Endothelial cell of umbilical vein (primary cell): ENCODE measurements at regions of chr17 and their contacts with region 1.

Region 1: DNA sequence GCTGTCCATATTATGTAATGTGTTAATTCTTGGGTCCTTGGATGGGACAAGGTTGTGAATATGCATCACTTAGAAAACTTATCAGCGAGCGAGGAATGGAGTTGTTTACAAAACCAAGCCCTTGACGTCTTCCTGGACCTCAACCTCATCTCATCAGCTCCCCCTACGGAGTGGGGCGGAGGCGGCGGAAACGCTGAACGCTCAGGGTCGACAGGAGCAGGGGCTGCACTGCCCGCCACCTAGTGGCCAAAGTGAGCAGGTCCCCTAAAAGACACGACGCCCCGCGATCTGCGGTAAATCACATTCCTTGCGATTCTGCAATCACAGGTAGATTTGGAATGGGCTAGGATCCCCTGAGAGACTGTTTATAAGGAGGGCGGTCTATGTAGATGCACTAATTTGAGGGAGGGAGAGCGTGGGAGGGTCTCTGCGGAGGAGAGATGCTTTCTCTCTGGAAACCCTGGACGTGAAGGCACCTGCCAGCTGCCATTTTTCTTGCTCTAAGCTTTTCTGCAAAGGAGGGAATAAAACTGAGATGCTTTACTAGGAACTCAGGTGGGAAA is 5.4 kb upstream of the ICAM2 start:
- DNase-seq: peak; percentile 82
- H3K4me3 ChIP-seq: no peak overlapping the region
- H3K27ac ChIP-seq: peak overlapping the region; percentile 43
- H3K4me1 ChIP-seq: peaks cover 29% of the 10 kb centered on the region
- H3K27me3 ChIP-seq: no peaks in the 10 kb centered on the region
- CTCF ChIP-seq: peak; percentile 98
- POLR2A ChIP-seq: no peak

Region 2: GRCh38 chr17:63919311-63919723 is 106.5 kb before region 1 on chr17:
- CTCF ChIA-PET with region 1: interaction called, 159 read pairs
- POLR2A ChIA-PET with region 1: no interaction called
- dilution Hi-C with region 1: no loop called
- intact Hi-C with region 1: loop called (anchors 1 kb)
- DNase-seq: peak; percentile 68
- H3K4me3 ChIP-seq: no peak overlapping the region
- H3K27ac ChIP-seq: no peak overlapping the region
- H3K4me1 ChIP-seq: no peaks in the 10 kb centered on the region
- H3K27me3 ChIP-seq: peaks cover 0 to 3% of the 10 kb centered on the region in 2 experiments
- CTCF ChIP-seq: peak; percentile 75 to 89
- POLR2A ChIP-seq: no peak

Region 3: GRCh38 chr17:64005734-64006167 is 20.1 kb before region 1 on chr17:
- CTCF ChIA-PET with region 1: interaction called, 140 read pairs
- POLR2A ChIA-PET with region 1: interaction called, 13 read pairs
- dilution Hi-C with region 1: no loop called
- intact Hi-C with region 1: loop called (anchors 1 kb)
- DNase-seq: peak; percentile 64
- H3K4me3 ChIP-seq: peak overlapping the region; percentile 66 to 87 (median 73)
- H3K27ac ChIP-seq: peak overlapping the region; percentile 91
- H3K4me1 ChIP-seq: peaks cover 85% of the 10 kb centered on the region
- H3K27me3 ChIP-seq: no peaks in the 10 kb centered on the region
- CTCF ChIP-seq: no peak
- POLR2A ChIP-seq: no peak

Region 4: GRCh38 chr17:64056269-64057005 is 30.6 kb after region 1 on chr17:
- CTCF ChIA-PET with region 1: interaction called, 44 read pairs
- POLR2A ChIA-PET with region 1: no interaction called
- dilution Hi-C with region 1: no loop called
- intact Hi-C with region 1: loop called (anchors 1 kb)
- DNase-seq: no peak
- H3K4me3 ChIP-seq: no peak overlapping the region
- H3K27ac ChIP-seq: no peak overlapping the region
- H3K4me1 ChIP-seq: peaks cover 17% of the 10 kb centered on the region
- H3K27me3 ChIP-seq: no peaks in the 10 kb centered on the region
- CTCF ChIP-seq: no peak
- POLR2A ChIP-seq: no peak

Region 5: GRCh38 chr17:64097196-64097936 is 71.6 kb after region 1 on chr17:
- CTCF ChIA-PET with region 1: interaction called, 10 read pairs
- POLR2A ChIA-PET with region 1: no interaction called
- dilution Hi-C with region 1: no loop called
- intact Hi-C with region 1: no loop called
- DNase-seq: peak; percentile 97
- H3K4me3 ChIP-seq: no peak overlapping the region
- H3K27ac ChIP-seq: peak overlapping the region; percentile 83
- H3K4me1 ChIP-seq: peaks cover 26% of the 10 kb centered on the region
- H3K27me3 ChIP-seq: no peaks in the 10 kb centered on the region
- CTCF ChIP-seq: no peak
- POLR2A ChIP-seq: no peak

Region 6: GRCh38 chr17:64174686-64175456 is 149.1 kb after region 1 on chr17:
- CTCF ChIA-PET with region 1: interaction called, 12 read pairs
- POLR2A ChIA-PET with region 1: no interaction called
- dilution Hi-C with region 1: no loop called
- intact Hi-C with region 1: loop called (anchors 1 kb)
- DNase-seq: peak; percentile 67
- H3K4me3 ChIP-seq: no peak overlapping the region
- H3K27ac ChIP-seq: peak overlapping the region; percentile 19
- H3K4me1 ChIP-seq: peaks cover 40% of the 10 kb centered on the region
- H3K27me3 ChIP-seq: no peaks in the 10 kb centered on the region
- CTCF ChIP-seq: no peak
- POLR2A ChIP-seq: no peak